Lower leg skin (tissue), 4 donors: ENCODE measurements at regions of chr7 and their contacts with region 1.

Region 1: DNA sequence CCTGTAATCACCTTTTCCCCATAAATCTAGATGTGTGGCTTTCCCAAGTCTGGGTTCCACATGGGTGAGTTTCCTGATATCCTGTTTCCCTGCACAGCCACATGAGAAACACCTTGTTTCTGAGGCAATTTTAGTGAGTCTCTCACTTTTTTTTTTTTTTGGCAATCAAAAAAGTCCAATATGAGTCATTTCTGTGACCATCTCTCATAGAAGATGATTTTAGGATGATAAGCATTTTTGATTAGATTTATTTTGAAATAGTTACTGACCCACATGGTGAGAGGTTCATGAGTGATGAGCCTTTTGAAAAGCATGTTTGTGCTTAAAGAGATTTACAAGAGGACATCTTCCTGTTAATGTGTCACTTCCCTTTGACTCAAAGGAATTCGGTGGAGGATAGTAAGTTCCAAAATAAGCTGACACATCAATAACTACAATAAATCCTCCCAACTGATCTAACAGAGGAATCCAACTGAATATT is 464.0 kb downstream of the INHBA start:
- DNase-seq: no peak
- H3K4me3 ChIP-seq: no peak overlapping the region
- CTCF ChIP-seq: no peak
- POLR2A ChIP-seq: no peak

Region 2: DNA sequence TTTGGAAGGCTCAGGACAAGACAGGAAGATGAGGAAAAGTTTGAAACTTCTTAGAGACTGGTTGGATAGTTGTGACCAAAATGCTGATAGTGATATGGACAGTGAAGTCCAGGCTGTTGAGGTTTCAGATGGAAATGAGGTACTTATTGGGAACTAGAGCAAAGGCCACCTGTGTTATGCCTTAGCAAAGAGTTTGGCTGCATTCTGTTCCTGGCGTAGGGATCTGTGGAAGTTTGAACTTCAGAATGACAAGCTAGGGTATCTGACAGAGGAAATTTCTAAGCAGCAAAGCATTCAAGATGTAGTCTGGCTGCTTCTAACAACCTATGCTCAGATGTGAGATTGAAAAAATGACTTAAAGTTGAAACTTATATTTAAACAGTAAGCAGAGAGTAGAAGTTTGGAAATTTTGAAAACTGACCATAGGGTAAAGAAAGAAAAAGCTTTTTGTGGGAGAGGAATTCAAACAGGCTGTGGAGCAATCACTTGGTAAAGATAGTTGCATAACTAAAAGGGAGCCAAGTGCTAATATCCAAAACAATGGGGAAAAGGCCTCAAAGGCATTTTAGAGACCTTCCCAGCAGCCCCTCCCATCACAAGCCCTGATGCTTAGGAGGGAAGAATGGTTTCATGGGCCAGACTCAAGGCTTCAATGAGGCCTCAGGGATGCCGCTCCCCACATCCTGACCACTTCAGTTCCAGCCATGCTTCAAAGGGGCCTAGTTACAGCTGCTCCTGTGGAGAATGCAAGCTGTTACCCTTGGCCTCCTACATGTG is 48.9 kb after region 1 on chr7:
- intact Hi-C with region 1: loop called (anchors 2 kb)
- DNase-seq: no peak
- H3K4me3 ChIP-seq: no peak overlapping the region
- CTCF ChIP-seq: no peak
- POLR2A ChIP-seq: no peak